K562 (cell line): ENCODE measurements at regions of chr12 and their contacts with region 1.

Region 1: GRCh38 chr12:48995061-48995879 is 3.9 kb downstream of the DDN start:
- DNase-seq: peak; percentile 84 to 90 (median 88)
- ATAC-seq: peak; percentile 80
- H3K4me3 ChIP-seq: no peak overlapping the region
- H3K27ac ChIP-seq: no peak overlapping the region
- H3K4me1 ChIP-seq: peaks cover 12 to 49% of the 10 kb centered on the region in 2 experiments
- H3K27me3 ChIP-seq: 0 out of 5 replicates have a peak, but pooled peaks cover 0 to 5% of the 10 kb centered on the region in 2 experiments
- CTCF ChIP-seq: peak; percentile 85 to 88 (median 87)
- EP300 ChIP-seq: no peak
- POLR2A ChIP-seq: no peak
- RAD21 ChIP-seq: peak; percentile 60 to 78

Region 2: DNA sequence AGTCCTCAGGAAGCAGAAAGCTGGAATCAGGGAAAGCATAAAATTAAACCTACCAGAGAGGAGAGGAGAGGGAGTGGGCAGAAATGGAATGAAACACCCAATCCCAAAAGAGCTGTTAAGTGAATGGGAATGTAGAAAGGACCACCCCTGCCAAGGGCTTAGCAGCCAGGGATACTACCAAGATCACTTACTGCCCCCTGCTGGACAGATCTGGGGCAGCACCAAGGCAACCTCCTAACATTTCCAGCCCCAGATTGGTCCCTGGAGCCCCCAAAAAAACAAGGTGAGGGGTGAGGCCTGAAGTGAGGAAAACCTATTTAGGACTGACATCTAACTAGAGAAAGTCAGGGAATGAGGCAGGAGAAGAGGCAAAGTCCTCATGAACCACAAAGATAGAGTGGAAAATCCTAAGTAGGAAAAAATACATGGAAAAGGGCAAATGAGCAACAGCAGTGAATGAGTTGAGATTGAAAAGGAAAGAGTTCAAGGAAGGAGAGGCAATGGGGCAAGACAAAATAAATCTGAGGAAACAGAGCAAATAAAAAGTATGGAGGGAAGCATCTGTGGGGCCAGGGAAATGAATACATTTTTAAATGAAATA is 58.8 kb before region 1 on chr12:
- CTCF ChIA-PET with region 1: interaction called, 3 read pairs
- POLR2A ChIA-PET with region 1: interaction called, 3 read pairs
- in situ Hi-C with region 1: no loop called
- intact Hi-C with region 1: loop called (anchors 2 kb)
- DNase-seq: peak; percentile 78 to 87 (median 84)
- ATAC-seq: peak; percentile 95
- H3K4me3 ChIP-seq: no peak overlapping the region
- H3K27ac ChIP-seq: no peak overlapping the region
- H3K4me1 ChIP-seq: no peaks in the 10 kb centered on the region; a peak in 1 of 5 replicates
- H3K27me3 ChIP-seq: no peaks in the 10 kb centered on the region
- CTCF ChIP-seq: peak; percentile 81 to 93 (median 84)
- EP300 ChIP-seq: no peak
- POLR2A ChIP-seq: no peak
- RAD21 ChIP-seq: peak; percentile 28 to 67

Region 3: DNA sequence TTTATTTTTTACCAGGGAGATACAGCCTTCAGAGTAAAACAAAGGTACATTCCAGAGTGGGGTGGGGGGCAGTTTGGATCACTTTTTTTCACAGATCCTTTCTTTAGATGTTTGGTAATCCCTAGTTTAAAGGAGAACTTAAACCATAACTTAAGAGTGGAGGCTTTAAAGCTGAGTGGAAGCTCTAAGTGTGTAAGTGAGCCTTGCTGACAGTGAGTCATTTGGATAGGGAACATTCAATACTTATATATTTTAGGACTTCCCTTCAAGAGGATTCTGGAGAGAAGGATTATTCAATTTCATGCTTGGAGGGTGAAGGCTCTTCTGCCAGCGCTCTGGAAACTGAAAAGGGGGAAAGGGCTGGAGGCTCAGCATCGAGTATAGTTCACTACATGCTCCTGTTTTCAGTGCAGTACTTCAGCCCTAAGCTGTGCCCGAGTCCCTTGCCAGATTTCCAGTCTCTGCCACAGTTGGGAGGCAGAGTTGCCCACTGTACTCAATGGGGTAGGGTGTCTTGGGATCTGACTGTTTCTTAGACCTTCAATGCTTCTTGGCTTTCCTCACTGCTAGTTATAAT is 14.9 kb after region 1 on chr12:
- CTCF ChIA-PET with region 1: interaction called, 10 read pairs
- POLR2A ChIA-PET with region 1: interaction called, 78 read pairs
- in situ Hi-C with region 1: no loop called
- intact Hi-C with region 1: no loop called
- DNase-seq: no peak
- ATAC-seq: no peak
- H3K4me3 ChIP-seq: no peak overlapping the region
- H3K27ac ChIP-seq: no peak overlapping the region
- H3K4me1 ChIP-seq: peaks cover 2 to 12% of the 10 kb centered on the region in 2 experiments; a peak in 3 of 5 replicates
- H3K27me3 ChIP-seq: no peaks in the 10 kb centered on the region
- CTCF ChIP-seq: no peak
- EP300 ChIP-seq: no peak
- POLR2A ChIP-seq: no peak
- RAD21 ChIP-seq: no peak

Region 4: GRCh38 chr12:49018261-49019119 is 23.2 kb after region 1 on chr12 and contains the start of gene PRKAG1:
- CTCF ChIA-PET with region 1: interaction called, 11 read pairs
- POLR2A ChIA-PET with region 1: interaction called, 78 read pairs
- in situ Hi-C with region 1: no loop called
- intact Hi-C with region 1: loop called (anchors 2 kb)
- DNase-seq: peak; percentile 96 to 99 (median 97)
- ATAC-seq: peak; percentile 89
- H3K4me3 ChIP-seq: peak within 1 kb of the TSS; percentile 69
- H3K27ac ChIP-seq: peak within 1 kb of the TSS; percentile 99
- H3K4me1 ChIP-seq: peaks cover 40 to 49% of the 10 kb centered on the region in 2 experiments
- H3K27me3 ChIP-seq: no peaks in the 10 kb centered on the region
- CTCF ChIP-seq: peak; percentile 76 to 85 (median 79)
- EP300 ChIP-seq: peak; percentile 68
- POLR2A ChIP-seq: peak; percentile 93
- RAD21 ChIP-seq: peak; percentile 26 to 27; a peak in 3 of 4 replicates
- polyA plus RNA-seq, gene PRKAG1: 82.7 to 126 TPM